ENCODE measurements at regions of chr3 and their contacts with region 1.

Region 1: GRCh38 chr3:141998669-141999290 is 122.3 kb downstream of the ATP1B3 start:
- DNase-seq: no peak
- H3K4me3 ChIP-seq: no peak overlapping the region
- H3K27ac ChIP-seq: no peak overlapping the region
- H3K27me3 ChIP-seq: no peaks in the 10 kb centered on the region
- CTCF ChIP-seq: peak in 50 of 56 donors; percentile 13 to 72 (median 50)

Region 2: DNA sequence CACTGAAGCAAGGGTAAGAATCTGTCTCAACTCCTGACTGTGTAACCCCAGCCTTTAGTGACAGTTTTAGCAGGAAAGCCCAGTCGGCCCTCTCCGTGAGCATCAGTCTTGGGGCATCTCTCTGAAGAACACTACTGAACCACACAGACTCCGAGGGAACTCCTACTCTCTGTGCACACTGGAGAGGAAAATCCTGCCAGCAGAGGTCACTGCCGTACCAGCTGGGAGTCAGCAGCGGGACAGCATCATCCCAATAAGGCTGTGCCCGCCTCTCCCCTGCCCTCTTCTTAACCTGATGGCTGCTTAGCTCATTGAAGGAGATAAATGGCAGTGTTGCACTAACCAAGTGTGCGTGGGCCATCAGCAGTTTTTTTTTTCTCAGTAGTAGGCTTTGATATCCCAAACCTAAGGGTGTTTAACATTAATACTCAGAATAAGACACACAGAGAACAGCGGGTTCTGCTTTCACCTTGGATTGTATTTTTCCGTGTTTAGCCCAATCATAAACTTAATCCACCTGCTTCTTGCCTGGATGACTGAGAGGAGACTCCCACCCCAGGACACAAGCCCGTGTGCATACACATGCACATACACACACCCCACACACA is 538.6 kb before region 1 on chr3:
- intact Hi-C with region 1: loop called in 1 of 2 experiments (anchors 5 kb)
- DNase-seq: peak; percentile 80 to 92 (median 88)
- H3K4me3 ChIP-seq: no peak overlapping the region
- H3K27ac ChIP-seq: no peak overlapping the region
- H3K27me3 ChIP-seq: no peaks in the 10 kb centered on the region
- CTCF ChIP-seq: peak; percentile 50 to 98 (median 90)

Region 3: GRCh38 chr3:141575879-141576743 is 422.7 kb before region 1 on chr3:
- intact Hi-C with region 1: loop called in 1 of 2 experiments (anchors 5 kb)
- DNase-seq: no peak
- H3K4me3 ChIP-seq: peak overlapping the region in 6 of 59 donors; percentile 7 to 36 (median 9)
- H3K27ac ChIP-seq: peak overlapping the region in 1 of 59 donors; percentile 6
- H3K27me3 ChIP-seq: no peaks in the 10 kb centered on the region
- CTCF ChIP-seq: peak in 55 of 56 donors; percentile 38 to 78 (median 56)

Region 4: GRCh38 chr3:141876381-141876890 is 122.3 kb before region 1 on chr3 and contains the start of gene ATP1B3:
- intact Hi-C with region 1: no loop called
- DNase-seq: peak; percentile 43 to 89 (median 78)
- H3K4me3 ChIP-seq: peak within 1 kb of the TSS; percentile 64 to 98 (median 87)
- H3K27ac ChIP-seq: peak within 1 kb of the TSS; percentile 78 to 100 (median 98)
- H3K27me3 ChIP-seq: no peaks in the 10 kb centered on the region
- CTCF ChIP-seq: peak in 10 of 56 donors; percentile 4 to 29 (median 12)
- total RNA-seq, gene ATP1B3: 60.5 to 189 (median 103) TPM

Region 5: DNA sequence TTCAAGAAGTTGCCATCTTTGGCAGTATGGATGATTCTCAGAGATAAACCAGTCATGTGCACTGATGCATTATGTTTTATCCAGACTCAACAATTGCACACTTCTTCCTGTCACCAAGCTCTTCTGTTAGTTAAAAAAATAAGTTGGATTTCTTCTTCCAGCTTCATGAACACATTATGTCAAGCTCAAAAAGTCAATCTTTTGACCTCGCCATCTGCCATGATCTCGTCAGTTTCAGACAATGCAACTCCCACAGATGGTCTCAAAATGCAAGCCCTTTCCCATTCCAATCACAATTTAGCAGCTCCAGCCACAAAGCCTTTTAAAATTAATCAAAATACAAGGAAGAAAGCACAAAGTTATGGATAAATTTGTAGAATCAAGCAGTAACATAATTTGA is 107.8 kb after region 1 on chr3:
- intact Hi-C with region 1: no loop called
- DNase-seq: no peak
- H3K4me3 ChIP-seq: no peak overlapping the region
- H3K27ac ChIP-seq: no peak overlapping the region
- H3K27me3 ChIP-seq: no peaks in the 10 kb centered on the region
- CTCF ChIP-seq: no peak